Endothelial cell of umbilical vein (primary cell): ENCODE measurements at regions of chr1 and their contacts with region 1.

Region 1: GRCh38 chr1:150561974-150562445 is 12.8 kb downstream of the ADAMTSL4 start:
- DNase-seq: peak; percentile 92
- H3K4me3 ChIP-seq: peak overlapping the region; percentile 3 to 49 (median 41)
- H3K27ac ChIP-seq: peak overlapping the region; percentile 99
- H3K4me1 ChIP-seq: peaks cover 57% of the 10 kb centered on the region
- H3K27me3 ChIP-seq: no peaks in the 10 kb centered on the region
- CTCF ChIP-seq: no peak
- POLR2A ChIP-seq: peak; percentile 15

Region 2: DNA sequence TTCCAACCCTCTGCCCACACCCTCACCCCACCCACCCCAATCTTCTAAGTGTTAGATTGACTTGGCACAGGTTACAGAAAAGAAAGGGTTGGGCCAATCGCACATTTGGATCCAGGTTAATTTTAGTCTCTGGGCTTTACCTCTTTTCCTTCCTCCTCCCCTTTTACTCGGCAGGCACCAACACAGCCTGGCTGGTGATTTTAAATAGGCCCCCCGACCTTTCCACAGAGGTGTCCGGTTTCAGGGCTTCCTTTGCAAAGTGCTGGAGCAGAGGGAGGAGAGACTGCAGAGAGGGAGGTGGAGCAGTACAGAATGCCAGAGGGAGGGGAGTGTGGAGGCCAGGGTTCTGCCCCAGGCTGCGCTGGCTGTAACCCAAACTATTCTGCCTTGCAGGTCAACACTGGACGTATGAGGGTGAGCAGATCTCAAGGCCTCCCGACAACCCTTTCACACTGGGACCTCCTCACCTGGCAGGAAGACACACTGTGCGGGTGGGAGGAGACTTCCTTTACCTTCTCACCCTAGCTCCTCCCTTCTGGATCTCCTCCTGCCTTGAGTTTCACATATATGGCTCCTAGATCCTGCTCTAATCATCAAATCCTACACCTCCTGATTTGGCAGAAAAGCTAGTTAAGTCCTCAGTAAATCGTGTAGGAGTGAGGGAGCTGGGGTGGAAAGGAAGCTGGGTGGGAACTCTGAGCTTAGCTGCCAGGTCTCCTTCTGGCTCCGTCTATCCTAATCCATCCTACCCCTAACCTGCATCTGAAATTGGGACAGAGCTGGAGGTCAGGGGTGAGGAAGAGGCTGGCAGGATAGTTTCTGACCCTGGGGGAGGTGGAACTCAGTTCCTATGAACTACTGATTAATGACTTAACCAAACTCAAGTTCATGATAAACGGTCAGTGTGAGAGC is 302.0 kb before region 1 on chr1:
- CTCF ChIA-PET with region 1: interaction called, 9 read pairs
- POLR2A ChIA-PET with region 1: no interaction called
- dilution Hi-C with region 1: no loop called
- intact Hi-C with region 1: loop called (anchors 1 kb)
- DNase-seq: peak; percentile 9
- H3K4me3 ChIP-seq: no peak overlapping the region
- H3K27ac ChIP-seq: no peak overlapping the region
- H3K4me1 ChIP-seq: peaks cover 7% of the 10 kb centered on the region
- H3K27me3 ChIP-seq: peaks cover 15 to 27% of the 10 kb centered on the region in 2 experiments
- CTCF ChIP-seq: no peak
- POLR2A ChIP-seq: no peak

Region 3: DNA sequence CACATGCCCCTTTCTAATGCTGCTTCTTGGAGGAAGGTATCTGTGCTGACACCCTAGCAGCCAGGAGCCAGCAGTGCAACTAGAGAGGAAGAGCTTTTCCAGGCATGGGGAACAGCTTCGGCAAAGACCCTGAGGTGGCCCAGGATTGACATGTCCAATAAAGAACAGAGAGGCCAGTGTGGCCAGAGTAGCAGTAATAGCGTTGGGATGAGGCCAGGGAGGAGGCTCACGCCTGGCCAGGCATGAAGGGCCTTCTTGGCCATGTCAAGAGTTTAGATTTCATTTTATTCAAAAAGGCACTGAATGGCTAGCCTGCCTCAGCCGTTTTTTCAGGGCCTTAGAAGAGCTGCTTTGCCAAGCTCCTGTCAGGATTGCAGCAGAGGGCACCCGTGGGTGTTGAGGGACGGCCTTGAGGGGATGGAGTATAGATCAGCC is 29.1 kb before region 1 on chr1:
- CTCF ChIA-PET with region 1: interaction called, 21 read pairs
- POLR2A ChIA-PET with region 1: no interaction called
- dilution Hi-C with region 1: no loop called
- intact Hi-C with region 1: no loop called
- DNase-seq: no peak
- H3K4me3 ChIP-seq: no peak overlapping the region
- H3K27ac ChIP-seq: no peak overlapping the region
- H3K4me1 ChIP-seq: no peaks in the 10 kb centered on the region
- H3K27me3 ChIP-seq: no peaks in the 10 kb centered on the region
- CTCF ChIP-seq: no peak
- POLR2A ChIP-seq: no peak

Region 4: DNA sequence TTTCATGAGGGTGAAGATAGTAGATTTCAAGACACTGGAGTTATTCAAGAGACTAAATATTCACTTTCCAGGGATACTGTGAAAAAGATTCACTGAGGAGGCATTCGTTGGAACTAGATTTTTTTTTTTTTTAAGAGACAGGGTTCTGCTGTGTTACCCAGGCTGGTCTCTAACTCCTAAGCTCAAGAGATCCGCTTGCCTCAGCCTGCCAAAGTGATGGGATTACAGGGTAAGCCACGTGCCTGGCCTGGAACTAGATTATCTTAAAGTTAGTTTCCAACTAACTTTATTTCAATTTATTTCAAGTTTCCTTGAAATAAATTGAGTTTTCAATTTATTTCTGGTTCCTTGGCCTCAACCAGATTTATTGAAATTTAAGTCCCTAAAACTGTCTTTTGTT is 41.7 kb after region 1 on chr1:
- CTCF ChIA-PET with region 1: interaction called, 13 read pairs
- POLR2A ChIA-PET with region 1: no interaction called
- dilution Hi-C with region 1: no loop called
- intact Hi-C with region 1: no loop called
- DNase-seq: no peak
- H3K4me3 ChIP-seq: no peak overlapping the region
- H3K27ac ChIP-seq: peak overlapping the region; percentile 100
- H3K4me1 ChIP-seq: peaks cover 17% of the 10 kb centered on the region
- H3K27me3 ChIP-seq: no peaks in the 10 kb centered on the region
- CTCF ChIP-seq: no peak
- POLR2A ChIP-seq: no peak

Region 5: GRCh38 chr1:150629115-150629928 is 67.3 kb after region 1 on chr1 and contains the start of gene ENSA:
- CTCF ChIA-PET with region 1: interaction called, 288 read pairs
- POLR2A ChIA-PET with region 1: interaction called, 3 read pairs
- dilution Hi-C with region 1: no loop called
- intact Hi-C with region 1: no loop called
- DNase-seq: peak; percentile 99
- H3K4me3 ChIP-seq: peak within 1 kb of the TSS; percentile 55 to 89 (median 67)
- H3K27ac ChIP-seq: peak within 1 kb of the TSS; percentile 71
- H3K4me1 ChIP-seq: peaks cover 11% of the 10 kb centered on the region
- H3K27me3 ChIP-seq: no peaks in the 10 kb centered on the region
- CTCF ChIP-seq: no peak
- POLR2A ChIP-seq: peak; percentile 38
- total RNA-seq, gene ENSA: 155 and 162 TPM in 2 replicates

Region 6: GRCh38 chr1:150813058-150813707 is 251.2 kb after region 1 on chr1:
- CTCF ChIA-PET with region 1: interaction called, 50 read pairs
- POLR2A ChIA-PET with region 1: no interaction called
- dilution Hi-C with region 1: no loop called
- intact Hi-C with region 1: loop called (anchors 1 kb)
- DNase-seq: peak; percentile 83
- H3K4me3 ChIP-seq: no peak overlapping the region
- H3K27ac ChIP-seq: no peak overlapping the region
- H3K4me1 ChIP-seq: peaks cover 2% of the 10 kb centered on the region
- H3K27me3 ChIP-seq: no peaks in the 10 kb centered on the region
- CTCF ChIP-seq: peak; percentile 76 to 81
- POLR2A ChIP-seq: no peak